HEK293 (cell line): ENCODE measurements at regions of chr6 and their contacts with region 1.

Region 1: DNA sequence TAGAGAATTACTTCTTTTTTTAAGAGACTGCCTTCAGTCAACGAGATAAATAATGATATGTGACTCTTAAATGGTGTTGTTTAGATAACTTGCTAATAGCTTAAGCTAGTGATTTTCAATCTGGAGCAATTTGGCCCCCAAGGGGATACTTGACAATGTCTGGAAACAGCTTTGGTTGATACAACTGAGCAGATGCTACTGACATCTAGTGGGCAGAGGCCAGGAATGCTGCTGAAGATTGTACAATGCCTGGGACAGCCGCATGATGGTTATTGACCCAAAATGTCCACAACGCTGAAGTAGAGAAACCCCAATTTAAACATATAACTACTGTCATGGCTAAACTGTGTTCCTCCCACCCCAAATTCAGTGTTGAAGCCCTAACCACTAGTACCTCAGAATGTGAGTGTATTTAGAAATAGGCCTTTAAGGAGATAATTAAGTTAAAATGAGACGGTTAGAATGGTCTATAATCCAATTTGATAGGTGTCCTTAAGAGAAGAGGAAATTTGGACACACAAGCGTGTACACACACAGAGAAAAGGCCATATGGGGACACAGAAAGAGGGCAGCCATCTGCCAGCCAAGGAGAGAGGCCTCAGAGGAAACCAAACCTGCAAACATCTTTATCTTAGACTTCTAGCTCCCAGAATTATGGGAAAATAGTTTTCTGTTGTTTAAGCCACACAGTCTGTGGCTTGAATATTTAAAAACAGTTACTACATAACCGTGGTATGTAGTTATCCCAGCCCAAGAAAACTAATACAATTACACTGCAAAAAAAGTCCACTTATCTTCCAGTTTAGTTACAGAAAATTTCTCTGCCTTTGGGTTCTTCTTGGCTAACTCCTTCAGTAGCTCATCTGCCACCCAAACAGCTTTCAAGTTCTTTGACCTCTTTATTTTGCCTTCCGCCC is 22.2 kb downstream of the RWDD2A start:
- H3K4me3 ChIP-seq: no peak overlapping the region
- H3K27ac ChIP-seq: no peak overlapping the region
- H3K4me1 ChIP-seq: no peaks in the 10 kb centered on the region
- CTCF ChIP-seq: peak; percentile 88

Region 2: GRCh38 chr6:83192871-83193746 is 22.3 kb before region 1 on chr6 and contains the starts of genes PGM3 and RWDD2A:
- CTCF ChIA-PET with region 1: interaction called, 17 read pairs
- POLR2A ChIA-PET with region 1: no interaction called
- H3K4me3 ChIP-seq: peak within 1 kb of the TSS; percentile 94
- H3K27ac ChIP-seq: peak within 1 kb of the TSS; percentile 76; the same call in 1 of the 2 replicates
- H3K4me1 ChIP-seq: peaks cover 2% of the 10 kb centered on the region; the same call in 1 of the 2 replicates
- CTCF ChIP-seq: peak; percentile 52

Region 3: GRCh38 chr6:83199863-83200225 is 15.5 kb before region 1 on chr6:
- CTCF ChIA-PET with region 1: interaction called, 17 read pairs
- POLR2A ChIA-PET with region 1: no interaction called
- H3K4me3 ChIP-seq: no peak overlapping the region
- H3K27ac ChIP-seq: no peak overlapping the region
- H3K4me1 ChIP-seq: no peaks in the 10 kb centered on the region
- CTCF ChIP-seq: no peak

Region 4: GRCh38 chr6:83514866-83515466 is 299.6 kb after region 1 on chr6:
- CTCF ChIA-PET with region 1: interaction called, 118 read pairs
- POLR2A ChIA-PET with region 1: interaction called, 3 read pairs
- H3K4me3 ChIP-seq: no peak overlapping the region
- H3K27ac ChIP-seq: no peak overlapping the region
- H3K4me1 ChIP-seq: no peaks in the 10 kb centered on the region
- CTCF ChIP-seq: peak; percentile 65